Common myeloid progenitor, CD34-positive (primary cell): ENCODE measurements at regions of chr6 and their contacts with region 1.

Region 1: GRCh38 chr6:11653028-11653583 is 115.6 kb downstream of the TMEM170B start:
- DNase-seq: peak; percentile 29 to 80 (median 73)
- H3K4me3 ChIP-seq: no peak overlapping the region
- H3K27ac ChIP-seq: no peak overlapping the region
- H3K4me1 ChIP-seq: peaks cover 0 to 11% (median 5%) of the 10 kb centered on the region in 4 experiments
- H3K27me3 ChIP-seq: no peaks in the 10 kb centered on the region

Region 2: GRCh38 chr6:11424395-11425050 is 228.6 kb before region 1 on chr6:
- CTCF ChIA-PET with region 1: no interaction called
- POLR2A ChIA-PET with region 1: no interaction called
- DNase-seq: no peak
- H3K4me3 ChIP-seq: no peak overlapping the region
- H3K27ac ChIP-seq: no peak overlapping the region
- H3K4me1 ChIP-seq: no peaks in the 10 kb centered on the region
- H3K27me3 ChIP-seq: no peaks in the 10 kb centered on the region

Region 3: DNA sequence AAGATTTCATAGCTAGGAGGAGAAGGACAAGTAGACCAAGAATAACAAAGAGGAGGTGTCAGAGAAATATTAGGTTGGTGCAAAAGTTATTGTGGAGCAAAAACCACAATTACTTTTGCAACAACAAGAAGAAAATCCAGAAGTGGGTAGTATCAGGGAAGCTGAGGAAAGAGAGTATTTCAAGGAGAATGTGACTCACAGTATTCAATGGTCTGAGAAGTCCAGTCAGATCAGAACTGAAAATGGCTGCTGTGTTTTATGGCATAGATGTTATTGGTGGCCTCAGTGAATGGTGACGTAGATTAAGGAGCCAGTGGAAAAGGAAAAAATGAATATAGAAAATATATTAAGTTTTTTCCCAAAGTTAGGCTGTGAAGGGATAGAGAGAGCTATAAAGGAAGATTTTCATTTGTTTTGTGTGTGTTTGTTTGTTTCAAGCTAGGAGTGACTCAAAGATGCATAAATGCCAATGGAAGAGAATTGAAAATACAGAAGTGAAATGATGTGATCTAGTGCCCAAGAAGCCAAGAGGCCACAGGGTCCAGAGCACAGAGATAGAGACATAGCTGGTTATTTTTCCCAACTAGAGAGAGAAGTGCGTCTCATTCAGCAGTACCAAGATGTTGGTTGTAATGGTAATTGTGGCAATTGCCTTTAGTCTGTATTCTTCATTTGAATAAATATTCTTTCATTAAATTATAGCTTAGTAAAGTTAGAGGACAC is 12.7 kb after region 1 on chr6:
- CTCF ChIA-PET with region 1: interaction called, 34 read pairs
- POLR2A ChIA-PET with region 1: no interaction called
- DNase-seq: no peak
- H3K4me3 ChIP-seq: no peak overlapping the region
- H3K27ac ChIP-seq: no peak overlapping the region
- H3K4me1 ChIP-seq: no peaks in the 10 kb centered on the region
- H3K27me3 ChIP-seq: no peaks in the 10 kb centered on the region

Region 4: DNA sequence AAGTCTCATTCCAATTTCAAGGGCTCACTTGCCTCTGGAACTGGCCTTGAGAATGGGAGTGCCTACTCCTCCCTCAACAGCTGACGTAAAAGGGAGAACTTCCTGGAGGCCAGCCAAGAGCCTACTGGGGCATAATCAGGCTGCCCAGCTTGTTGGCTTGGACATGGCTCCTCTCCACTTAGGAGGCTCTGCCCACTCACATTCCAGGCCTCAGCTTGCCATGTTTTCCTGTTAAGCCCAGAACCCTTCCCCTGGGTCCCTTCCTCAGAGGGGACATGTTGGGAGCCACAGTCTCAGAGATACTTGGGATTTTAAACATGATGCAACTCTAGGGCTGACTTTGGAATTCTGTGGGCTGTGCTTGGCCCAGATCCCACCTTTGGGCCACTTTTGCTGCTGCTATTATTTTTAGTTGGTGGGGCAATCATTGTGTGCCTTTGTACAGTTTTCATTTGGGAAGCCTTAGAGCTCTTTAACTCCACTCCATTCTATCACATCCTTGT is 157.0 kb after region 1 on chr6:
- CTCF ChIA-PET with region 1: no interaction called
- POLR2A ChIA-PET with region 1: no interaction called
- DNase-seq: no peak
- H3K4me3 ChIP-seq: no peak overlapping the region
- H3K27ac ChIP-seq: no peak overlapping the region
- H3K4me1 ChIP-seq: no peaks in the 10 kb centered on the region
- H3K27me3 ChIP-seq: peaks cover 0 to 2% (median 0%) of the 10 kb centered on the region in 5 experiments

Region 5: DNA sequence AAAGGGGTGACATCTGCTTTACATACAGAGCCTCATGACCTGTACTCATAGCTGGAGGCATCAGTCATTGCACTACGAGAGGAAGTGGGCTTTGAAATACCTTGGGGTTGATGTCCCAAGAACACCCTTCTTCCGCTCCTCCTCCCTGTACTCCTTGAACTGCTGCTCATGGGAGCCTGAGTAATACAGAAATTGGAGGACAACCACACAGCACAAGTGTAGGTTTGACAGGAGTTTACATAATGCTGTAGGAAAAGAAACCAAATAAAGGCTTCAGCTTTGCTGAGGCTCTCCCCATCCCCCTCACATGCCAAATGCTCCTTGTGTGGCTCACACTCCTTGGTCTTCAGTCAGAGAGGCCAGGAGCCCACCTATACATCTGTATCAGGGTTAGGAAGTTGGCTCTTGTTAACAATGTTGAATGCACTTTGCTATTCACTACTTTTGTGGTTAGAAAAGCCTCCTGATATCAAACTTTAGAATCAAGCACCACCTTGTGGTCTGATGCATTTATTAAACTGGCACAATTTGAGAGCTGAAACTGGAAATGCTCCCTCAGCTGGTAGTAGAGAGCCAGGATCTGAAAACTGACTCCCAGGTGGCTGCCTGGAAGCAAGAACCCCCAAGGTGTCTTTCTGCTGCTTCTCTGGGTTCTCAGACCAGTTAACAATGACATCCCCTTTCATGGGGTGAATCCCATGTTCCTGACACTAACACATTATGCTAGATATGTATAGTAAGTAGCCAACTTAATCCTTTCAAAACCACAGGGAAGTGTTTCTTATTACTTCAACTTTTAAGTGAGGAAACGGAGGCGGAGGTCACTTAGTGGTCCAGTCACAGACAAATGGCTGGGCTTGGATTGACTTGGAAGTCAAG is 580.8 kb after region 1 on chr6:
- CTCF ChIA-PET with region 1: interaction called, 20 read pairs
- POLR2A ChIA-PET with region 1: no interaction called
- DNase-seq: peak; percentile 76 to 82 (median 82)
- H3K4me3 ChIP-seq: no peak overlapping the region
- H3K27ac ChIP-seq: no peak overlapping the region
- H3K4me1 ChIP-seq: peaks cover 0 to 7% (median 2%) of the 10 kb centered on the region in 4 experiments
- H3K27me3 ChIP-seq: no peaks in the 10 kb centered on the region

Region 6: DNA sequence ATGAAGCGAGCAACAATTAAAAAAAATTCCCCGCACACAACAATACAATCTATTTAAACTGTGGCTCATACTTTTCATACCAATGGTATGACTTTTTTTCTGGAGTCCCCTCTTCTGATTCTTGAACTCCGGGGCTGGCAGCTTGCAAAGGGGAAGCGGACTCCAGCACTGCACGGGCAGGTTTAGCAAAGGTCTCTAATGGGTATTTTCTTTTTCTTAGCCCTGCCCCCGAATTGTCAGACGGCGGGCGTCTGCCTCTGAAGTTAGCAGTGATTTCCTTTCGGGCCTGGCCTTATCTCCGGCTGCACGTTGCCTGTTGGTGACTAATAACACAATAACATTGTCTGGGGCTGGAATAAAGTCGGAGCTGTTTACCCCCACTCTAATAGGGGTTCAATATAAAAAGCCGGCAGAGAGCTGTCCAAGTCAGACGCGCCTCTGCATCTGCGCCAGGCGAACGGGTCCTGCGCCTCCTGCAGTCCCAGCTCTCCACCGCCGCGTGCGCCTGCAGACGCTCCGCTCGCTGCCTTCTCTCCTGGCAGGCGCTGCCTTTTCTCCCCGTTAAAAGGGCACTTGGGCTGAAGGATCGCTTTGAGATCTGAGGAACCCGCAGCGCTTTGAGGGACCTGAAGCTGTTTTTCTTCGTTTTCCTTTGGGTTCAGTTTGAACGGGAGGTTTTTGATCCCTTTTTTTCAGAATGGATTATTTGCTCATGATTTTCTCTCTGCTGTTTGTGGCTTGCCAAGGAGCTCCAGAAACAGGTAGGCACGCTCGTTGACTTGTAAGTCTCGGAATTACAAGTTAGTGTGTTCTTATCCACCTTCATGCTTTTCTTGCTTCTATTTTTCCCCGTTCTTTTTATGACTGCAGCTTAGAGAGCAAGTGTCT is 637.1 kb after region 1 on chr6 and contains the start of gene EDN1:
- CTCF ChIA-PET with region 1: interaction called, 17 read pairs
- POLR2A ChIA-PET with region 1: no interaction called
- DNase-seq: peak; percentile 80 to 95 (median 91)
- H3K4me3 ChIP-seq: peak within 1 kb of the TSS; percentile 13 to 85 (median 68)
- H3K27ac ChIP-seq: no peak within 1 kb of the TSS
- H3K4me1 ChIP-seq: peaks cover 10 to 43% (median 15%) of the 10 kb centered on the region in 4 experiments
- H3K27me3 ChIP-seq: peaks cover 0 to 7% (median 4%) of the 10 kb centered on the region in 5 experiments

Region 7: DNA sequence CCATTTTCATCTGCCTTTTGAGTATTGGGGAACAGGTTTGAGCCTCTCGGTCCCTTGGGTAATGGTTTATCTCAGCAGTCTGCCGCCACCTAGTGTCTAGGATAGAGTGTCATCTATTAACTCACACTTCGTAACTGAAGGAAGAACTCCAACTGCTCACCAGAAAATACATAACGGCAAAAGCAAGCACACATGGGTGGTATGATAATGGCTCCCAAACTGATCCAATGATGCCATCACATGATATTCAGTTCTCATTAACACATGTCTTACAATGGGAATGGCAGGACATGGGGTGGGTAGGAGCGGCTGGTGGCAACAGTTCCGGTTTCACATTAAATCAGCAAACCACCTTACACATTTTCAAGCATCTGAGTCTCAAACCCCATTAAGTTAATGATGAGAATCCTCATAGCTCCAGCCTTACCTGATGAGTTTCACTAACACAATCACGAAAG is 952.8 kb after region 1 on chr6:
- CTCF ChIA-PET with region 1: interaction called, 12 read pairs
- POLR2A ChIA-PET with region 1: no interaction called
- DNase-seq: peak; percentile 68 to 88 (median 86)
- H3K4me3 ChIP-seq: peak overlapping the region in 1 of 7 experiments; percentile 53
- H3K27ac ChIP-seq: no peak overlapping the region
- H3K4me1 ChIP-seq: peaks cover 0 to 9% (median 5%) of the 10 kb centered on the region in 4 experiments
- H3K27me3 ChIP-seq: no peaks in the 10 kb centered on the region